ENCODE measurements at regions of chr4 and their contacts with region 1.

Region 1: GRCh38 chr4:77367638-77368037 is 210.6 kb downstream of the CCNG2 start:
- DNase-seq: no peak
- ATAC-seq: no peak
- H3K4me3 ChIP-seq: no peak overlapping the region
- H3K27ac ChIP-seq: no peak overlapping the region
- H3K4me1 ChIP-seq: no peaks in the 10 kb centered on the region
- H3K27me3 ChIP-seq: 0 out of 5 replicates have a peak, but pooled peaks cover 0 to 4% of the 10 kb centered on the region in 2 experiments
- CTCF ChIP-seq: no peak
- EP300 ChIP-seq: no peak
- POLR2A ChIP-seq: no peak
- RAD21 ChIP-seq: no peak

Region 2: DNA sequence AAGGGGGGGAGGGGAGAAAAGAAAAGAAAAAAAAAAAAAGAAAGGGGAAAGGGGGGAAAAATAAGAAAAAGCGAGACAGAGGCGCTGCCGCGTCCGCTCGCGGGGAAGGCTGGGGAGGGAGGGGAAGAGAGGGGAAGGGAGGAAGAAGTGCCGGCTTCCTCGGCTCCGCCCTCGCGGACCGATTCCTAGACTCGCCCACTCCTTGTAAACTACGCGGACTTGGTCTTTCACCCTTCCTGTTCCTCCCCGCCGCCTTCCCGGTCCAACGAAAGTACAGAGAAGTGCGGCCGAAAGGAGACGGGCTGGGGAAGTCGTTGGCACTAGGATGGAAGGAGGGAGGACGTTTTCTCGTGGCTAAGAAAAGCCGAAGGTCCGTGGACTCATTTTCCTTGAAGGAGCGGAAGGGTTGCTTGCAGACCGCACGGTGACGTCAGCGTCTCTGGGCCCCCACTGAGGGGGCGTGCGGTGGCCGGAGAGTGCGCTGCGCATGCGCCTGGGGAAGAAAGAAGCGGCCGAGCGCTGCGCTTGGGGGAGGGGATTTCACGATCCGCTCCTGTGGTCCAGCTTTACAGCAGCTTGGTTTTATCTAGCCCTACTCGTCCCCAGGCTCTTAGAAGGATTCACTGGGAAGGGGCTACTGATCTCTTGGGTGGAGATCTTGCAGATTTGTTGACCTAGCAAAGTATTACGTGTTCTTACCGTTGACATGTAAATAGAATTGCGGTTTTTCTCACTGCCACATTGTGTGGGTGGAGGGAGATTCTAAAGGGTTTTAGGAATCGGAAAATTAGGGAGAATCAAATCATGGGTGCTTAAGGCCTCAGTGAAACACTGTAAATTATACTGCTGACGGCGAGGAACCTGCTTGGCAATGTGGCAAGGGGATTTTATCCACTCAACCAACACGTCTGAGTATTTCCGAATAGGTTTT is 291.5 kb before region 1 on chr4 and contains the start of gene CCNI:
- CTCF ChIA-PET with region 1: no interaction called
- POLR2A ChIA-PET with region 1: no interaction called
- in situ Hi-C with region 1: no loop called
- intact Hi-C with region 1: no loop called
- DNase-seq: peak; percentile 93 to 98 (median 95)
- ATAC-seq: peak; percentile 79
- H3K4me3 ChIP-seq: peak within 1 kb of the TSS; percentile 81
- H3K27ac ChIP-seq: peak within 1 kb of the TSS; percentile 99
- H3K4me1 ChIP-seq: peaks cover 3% of the 10 kb centered on the region in 2 experiments; a peak in 2 of 5 replicates
- H3K27me3 ChIP-seq: no peaks in the 10 kb centered on the region
- CTCF ChIP-seq: no peak
- EP300 ChIP-seq: peak; percentile 24
- POLR2A ChIP-seq: peak; percentile 97
- RAD21 ChIP-seq: no peak
- polyA plus RNA-seq, gene CCNI: 43.3 to 60.2 TPM

Region 3: DNA sequence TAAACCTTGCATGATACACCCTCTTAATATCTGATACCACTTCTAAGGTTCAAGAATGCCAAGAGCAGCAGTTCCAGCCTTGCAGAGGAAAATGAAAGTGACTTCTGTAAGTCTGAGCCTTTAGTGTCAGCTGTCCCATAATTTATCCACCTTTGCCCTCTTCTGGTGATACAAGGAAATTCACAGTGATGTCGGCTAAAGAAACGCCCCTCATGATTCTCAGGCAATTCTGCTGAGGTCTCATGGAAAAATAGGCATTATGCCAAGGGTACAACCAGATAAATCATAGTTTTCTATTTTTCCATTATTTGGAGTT is 65.7 kb after region 1 on chr4:
- CTCF ChIA-PET with region 1: no interaction called
- POLR2A ChIA-PET with region 1: no interaction called
- in situ Hi-C with region 1: no loop called
- intact Hi-C with region 1: loop called (anchors 5 kb)
- DNase-seq: peak; percentile 8 to 19 (median 14)
- ATAC-seq: peak; percentile 72
- H3K4me3 ChIP-seq: no peak overlapping the region
- H3K27ac ChIP-seq: no peak overlapping the region
- H3K4me1 ChIP-seq: no peaks in the 10 kb centered on the region
- H3K27me3 ChIP-seq: no peaks in the 10 kb centered on the region; a peak in 1 of 5 replicates
- CTCF ChIP-seq: peak; percentile 42 to 56 (median 48); a peak in 5 of 6 replicates
- EP300 ChIP-seq: no peak
- POLR2A ChIP-seq: no peak
- RAD21 ChIP-seq: peak; percentile 25 to 42; a peak in 3 of 4 replicates

Measured in K562 (cell line).